Sigmoid colon (tissue), 7 donors: ENCODE measurements at regions of chr2 and their contacts with region 1.

Region 1: DNA sequence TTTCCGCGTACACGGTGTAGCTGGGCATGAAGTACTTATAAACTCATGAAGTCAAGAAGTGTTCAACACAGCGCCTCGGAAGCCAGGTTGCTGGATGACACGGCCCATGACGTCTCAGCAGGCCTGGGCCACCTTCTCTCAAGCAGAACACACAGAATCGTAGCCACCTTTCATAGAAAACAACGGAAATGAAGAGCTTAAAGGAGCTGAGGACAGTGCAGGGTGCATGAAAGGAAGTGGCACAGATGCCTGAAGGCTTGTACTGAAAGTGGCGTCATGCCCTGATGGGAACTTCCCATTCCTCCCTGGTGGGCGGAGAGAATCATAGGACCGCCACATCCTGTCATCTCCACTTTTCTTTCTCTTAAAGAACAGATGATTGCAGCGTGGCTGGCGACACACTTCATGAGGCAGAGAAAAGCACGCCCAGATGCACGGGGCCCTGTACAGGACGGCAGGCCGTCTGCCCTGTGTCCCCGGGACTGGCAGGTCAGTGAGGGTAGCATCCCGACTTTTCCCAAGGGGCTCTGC is 31.1 kb downstream of the HDAC4 start:
- DNase-seq: peak; percentile 83
- H3K4me3 ChIP-seq: no peak overlapping the region
- H3K27ac ChIP-seq: peak overlapping the region in 3 of 4 donors; percentile 71 to 97 (median 96)
- H3K4me1 ChIP-seq: peaks cover 0 to 67% (median 42%) of the 10 kb centered on the region in 4 donors
- H3K27me3 ChIP-seq: no peaks in the 10 kb centered on the region
- CTCF ChIP-seq: no peak
- EP300 ChIP-seq: peak in 1 of 4 donors; percentile 66
- POLR2A ChIP-seq: no peak

Region 2: DNA sequence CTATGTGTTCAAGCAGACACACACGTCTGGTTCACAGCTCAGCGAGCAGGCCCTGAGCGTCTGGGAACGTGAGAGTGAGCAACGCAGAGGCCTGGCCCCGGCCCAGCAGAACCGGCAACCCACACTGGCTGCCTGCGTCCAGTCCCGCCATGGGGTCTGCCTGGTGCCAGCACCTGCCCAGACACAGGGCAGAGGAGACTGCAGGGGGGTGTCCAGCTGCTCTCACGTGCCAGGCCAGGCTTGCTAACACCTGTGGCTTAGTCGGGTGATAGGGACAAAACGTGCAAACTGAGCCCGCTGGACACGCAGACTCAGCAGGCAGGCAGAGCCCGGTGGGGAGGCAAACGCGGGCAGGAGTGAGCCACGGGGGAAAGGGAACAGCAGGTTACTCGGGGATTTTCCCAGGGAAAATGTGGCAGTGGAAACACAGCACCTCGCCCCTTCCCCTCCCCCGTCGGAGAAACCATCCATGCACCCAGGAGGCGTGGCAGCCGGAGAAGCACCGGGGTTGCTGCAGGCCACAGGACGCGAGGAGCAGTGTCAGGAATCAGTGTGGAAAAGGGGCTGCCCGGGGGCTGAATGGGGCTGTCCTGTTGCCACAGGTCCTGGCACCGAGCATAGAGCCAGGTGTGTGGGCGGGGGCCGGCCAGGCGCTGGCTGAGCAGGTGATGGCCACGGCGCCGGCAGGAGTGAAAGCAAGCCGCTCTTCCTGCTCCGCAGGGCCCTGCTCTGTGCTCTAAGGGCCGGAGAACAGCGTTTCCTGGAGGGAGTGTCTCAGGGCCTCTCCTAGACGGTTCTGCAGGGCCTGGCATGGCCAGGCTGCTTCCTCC is 123.6 kb before region 1 on chr2:
- intact Hi-C with region 1: no loop called
- DNase-seq: peak; percentile 89
- H3K4me3 ChIP-seq: peak overlapping the region in 1 of 4 donors; percentile 4
- H3K27ac ChIP-seq: peak overlapping the region; percentile 55 to 80 (median 74)
- H3K4me1 ChIP-seq: peaks cover 0 to 89% (median 75%) of the 10 kb centered on the region in 4 donors
- H3K27me3 ChIP-seq: no peaks in the 10 kb centered on the region
- CTCF ChIP-seq: no peak
- EP300 ChIP-seq: no peak
- POLR2A ChIP-seq: no peak

Region 3: DNA sequence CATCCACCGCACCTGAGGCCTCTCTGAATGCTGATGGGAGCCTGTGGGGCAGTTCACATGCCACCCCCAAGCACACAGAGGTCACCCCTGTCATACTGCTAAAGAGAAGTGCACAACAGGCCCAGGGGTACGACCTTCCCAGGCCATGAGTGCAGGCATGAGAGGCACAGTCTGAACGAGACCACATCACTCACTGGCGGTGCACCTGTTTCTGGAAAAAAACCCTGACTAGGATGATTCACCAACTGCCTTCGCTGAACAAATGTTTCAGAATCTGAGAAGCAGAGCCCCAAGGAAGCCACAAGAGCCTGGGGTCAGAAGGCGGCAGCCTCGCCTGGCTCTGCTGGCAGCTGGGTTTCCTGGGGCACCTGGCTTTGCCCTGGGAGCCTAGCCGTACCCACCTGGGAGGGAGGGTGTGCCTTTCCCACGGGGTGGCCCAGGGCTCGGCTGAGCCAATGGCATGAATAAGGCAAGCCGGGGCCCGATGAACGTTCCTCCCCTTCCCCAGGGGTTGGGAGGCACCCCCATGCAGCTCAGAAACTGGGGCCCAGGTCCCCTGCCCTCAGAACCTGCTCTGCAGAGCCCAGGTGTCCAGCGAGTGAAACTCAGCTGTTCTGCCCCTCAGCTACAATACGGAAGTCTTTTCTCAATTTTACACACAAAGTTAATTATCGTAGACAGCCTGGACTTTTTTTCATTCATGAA is 42.7 kb before region 1 on chr2:
- intact Hi-C with region 1: no loop called
- DNase-seq: peak; percentile 68
- H3K4me3 ChIP-seq: no peak overlapping the region
- H3K27ac ChIP-seq: peak overlapping the region; percentile 92 to 97 (median 96)
- H3K4me1 ChIP-seq: peaks cover 0 to 100% (median 91%) of the 10 kb centered on the region in 4 donors
- H3K27me3 ChIP-seq: no peaks in the 10 kb centered on the region
- CTCF ChIP-seq: no peak
- EP300 ChIP-seq: no peak
- POLR2A ChIP-seq: no peak

Region 4: DNA sequence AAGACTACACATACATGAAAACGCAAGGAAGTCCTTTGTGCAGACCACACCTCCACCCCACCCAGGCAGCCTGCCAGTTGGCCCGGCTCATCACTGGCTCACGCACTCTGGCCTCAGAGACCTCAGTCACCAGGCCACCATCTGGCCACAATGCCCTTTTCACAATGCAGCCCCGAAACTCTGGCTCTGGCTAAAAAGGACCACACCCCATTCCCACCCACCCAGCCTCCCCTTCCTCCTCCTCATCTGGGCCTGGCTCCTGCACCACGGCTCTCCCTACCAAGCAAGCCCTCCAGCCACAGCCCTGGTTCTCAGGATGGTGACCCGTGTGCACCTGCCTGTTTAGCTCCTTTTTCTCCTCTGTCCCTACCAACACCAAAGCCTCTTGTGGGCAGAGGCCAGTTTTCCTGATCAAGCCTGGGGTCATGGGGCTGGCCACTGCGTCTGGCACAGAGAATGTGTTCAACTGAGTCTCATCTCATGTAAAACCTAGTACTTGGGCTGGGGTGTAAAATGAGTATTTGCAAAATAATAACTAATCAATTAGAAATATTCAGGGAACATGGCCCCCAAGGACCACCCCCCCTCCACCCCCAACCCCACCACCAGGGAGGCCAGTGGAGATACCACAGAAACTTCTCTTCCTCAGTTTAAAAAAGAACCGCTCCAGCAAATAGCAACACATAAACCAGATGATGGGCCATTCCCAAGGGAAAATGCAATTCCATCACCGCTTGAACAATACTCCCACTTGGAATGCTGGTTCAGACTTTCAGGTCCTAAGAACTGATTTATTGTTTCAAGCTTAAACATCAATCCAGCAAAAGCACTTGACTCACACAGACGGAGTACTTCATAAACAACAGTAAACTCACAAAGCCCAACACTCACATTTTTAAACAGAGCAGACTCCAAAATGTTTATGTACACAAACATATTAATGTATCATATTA is 24.0 kb after region 1 on chr2:
- intact Hi-C with region 1: loop called (anchors 2 kb)
- DNase-seq: peak; percentile 78
- H3K4me3 ChIP-seq: no peak overlapping the region
- H3K27ac ChIP-seq: peak overlapping the region in 3 of 4 donors; percentile 87 to 95 (median 87)
- H3K4me1 ChIP-seq: peaks cover 4 to 86% (median 80%) of the 10 kb centered on the region in 4 donors
- H3K27me3 ChIP-seq: no peaks in the 10 kb centered on the region
- CTCF ChIP-seq: no peak
- EP300 ChIP-seq: no peak
- POLR2A ChIP-seq: no peak